ENCODE measurements at regions of chr12 and their contacts with region 1.

Region 1: GRCh38 chr12:12628013-12628412 is 16.3 kb downstream of the CREBL2 start:
- DNase-seq: no peak
- H3K4me3 ChIP-seq: no peak overlapping the region
- H3K4me3 Mint-ChIP-seq: no peak overlapping the region
- H3K27ac Mint-ChIP-seq: no peak overlapping the region
- H3K4me1 ChIP-seq: no peaks in the 10 kb centered on the region; the same call in 1 of the 2 replicates
- H3K4me1 Mint-ChIP-seq: peaks cover 11% of the 10 kb centered on the region
- H3K27me3 ChIP-seq: no peaks in the 10 kb centered on the region
- H3K27me3 Mint-ChIP-seq: no peaks in the 10 kb centered on the region
- CTCF ChIP-seq: no peak

Region 2: GRCh38 chr12:12645485-12645884 is 17.5 kb after region 1 on chr12:
- CTCF ChIA-PET with region 1: interaction called, 3 read pairs
- POLR2A ChIA-PET with region 1: interaction called, 10 read pairs
- intact Hi-C with region 1: no loop called
- DNase-seq: peak in 1 of 2 experiments; percentile 58
- H3K4me3 ChIP-seq: no peak overlapping the region
- H3K4me3 Mint-ChIP-seq: no peak overlapping the region
- H3K27ac Mint-ChIP-seq: no peak overlapping the region
- H3K4me1 ChIP-seq: no peaks in the 10 kb centered on the region
- H3K4me1 Mint-ChIP-seq: no peaks in the 10 kb centered on the region
- H3K27me3 ChIP-seq: no peaks in the 10 kb centered on the region
- H3K27me3 Mint-ChIP-seq: no peaks in the 10 kb centered on the region
- CTCF ChIP-seq: peak; percentile 42 to 59

Region 3: DNA sequence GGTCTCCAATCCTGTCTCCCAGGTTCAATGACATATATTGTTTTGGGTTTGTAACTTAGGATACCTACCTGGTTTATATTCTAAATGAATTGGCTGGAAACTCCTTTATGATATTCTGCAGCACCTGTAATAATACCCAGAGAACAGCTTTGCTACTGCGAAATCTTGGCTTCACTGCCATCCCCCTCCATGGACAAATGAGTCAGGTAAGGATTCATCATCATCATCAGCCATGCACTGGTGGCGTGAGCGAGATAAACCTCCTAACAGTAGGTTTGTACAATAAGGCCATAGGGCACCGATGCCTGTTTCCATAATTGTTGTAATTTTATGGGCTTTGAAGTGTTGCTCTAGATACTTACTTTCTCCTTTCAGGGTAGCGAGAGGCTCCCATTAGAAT is 195.8 kb after region 1 on chr12:
- CTCF ChIA-PET with region 1: no interaction called
- POLR2A ChIA-PET with region 1: no interaction called
- intact Hi-C with region 1: no loop called
- DNase-seq: no peak
- H3K4me3 ChIP-seq: no peak overlapping the region
- H3K4me3 Mint-ChIP-seq: no peak overlapping the region
- H3K27ac Mint-ChIP-seq: peak overlapping the region; percentile 47
- H3K4me1 ChIP-seq: peaks cover 64% of the 10 kb centered on the region
- H3K4me1 Mint-ChIP-seq: peaks cover 39% of the 10 kb centered on the region
- H3K27me3 ChIP-seq: no peaks in the 10 kb centered on the region
- H3K27me3 Mint-ChIP-seq: no peaks in the 10 kb centered on the region
- CTCF ChIP-seq: no peak

Measured in Caco-2 (cell line).